Natural killer cell (primary cell): ENCODE measurements at regions of chr5 and their contacts with region 1.

Region 1: GRCh38 chr5:157180374-157181264 is at the start of gene ITK:
- DNase-seq: peak; percentile 27 to 88
- ATAC-seq: peak; percentile 84 to 94 (median 86)
- H3K4me3 ChIP-seq: peak within 1 kb of the TSS; percentile 61
- H3K4me3 Mint-ChIP-seq: peak within 1 kb of the TSS; percentile 99
- H3K27ac ChIP-seq: peak within 1 kb of the TSS; percentile 91
- H3K27ac Mint-ChIP-seq: peak within 1 kb of the TSS; percentile 96 to 97
- H3K4me1 ChIP-seq: peaks cover 21% of the 10 kb centered on the region
- H3K4me1 Mint-ChIP-seq: peaks cover 62 to 71% of the 10 kb centered on the region in 2 donors
- H3K27me3 ChIP-seq: no peaks in the 10 kb centered on the region
- H3K27me3 Mint-ChIP-seq: no peaks in the 10 kb centered on the region
- CTCF ChIP-seq: no peak
- total RNA-seq, gene ITK: 153 to 188 (median 186) TPM

Region 2: DNA sequence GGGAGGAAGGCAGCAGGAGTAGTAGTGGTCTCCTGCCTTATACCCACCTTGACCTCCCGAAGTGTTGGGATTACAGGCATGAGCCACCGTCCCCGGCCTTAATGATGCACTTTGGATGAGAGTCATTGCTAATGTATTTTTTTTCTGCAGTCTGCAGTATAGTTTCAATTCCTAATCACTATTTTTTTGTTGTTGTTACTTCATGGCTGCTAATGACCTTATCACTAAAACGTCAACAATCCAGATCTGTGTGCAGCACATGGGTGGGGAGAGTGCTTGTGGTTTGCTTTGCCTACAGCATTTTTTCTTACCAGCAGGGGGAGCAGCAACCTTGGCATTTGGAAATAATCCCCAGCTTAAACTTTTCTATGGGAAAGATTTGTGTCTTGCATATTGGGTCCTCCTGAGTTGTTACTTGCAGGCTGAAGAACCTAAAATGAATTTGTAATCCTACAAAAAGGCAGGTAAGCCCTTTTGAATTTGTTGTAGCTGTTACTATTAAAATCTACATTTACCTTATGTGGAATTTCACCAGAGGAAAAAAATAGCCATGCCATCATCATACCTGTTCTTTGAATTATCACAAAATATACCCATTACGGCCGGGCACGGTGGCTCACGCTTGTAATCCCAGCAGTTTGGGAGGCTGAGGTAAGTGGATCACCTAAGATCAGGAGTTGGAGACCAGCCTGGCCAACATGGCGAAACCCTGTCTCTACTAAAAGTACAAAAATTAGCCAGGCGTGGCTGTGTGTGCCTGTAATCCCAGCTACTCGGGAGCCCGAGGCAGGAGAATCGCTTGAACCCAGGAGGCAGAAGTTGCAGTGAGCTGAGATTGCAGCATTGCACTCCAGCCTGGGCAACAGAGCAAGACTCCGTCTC is 31.6 kb before region 1 on chr5:
- intact Hi-C with region 1: loop called (anchors 1 kb)
- DNase-seq: peak; percentile 66 to 93
- ATAC-seq: peak; percentile 95 to 97 (median 97)
- H3K4me3 ChIP-seq: no peak overlapping the region
- H3K4me3 Mint-ChIP-seq: no peak overlapping the region
- H3K27ac ChIP-seq: no peak overlapping the region
- H3K27ac Mint-ChIP-seq: peak overlapping the region; percentile 88 to 93
- H3K4me1 ChIP-seq: peaks cover 8% of the 10 kb centered on the region
- H3K4me1 Mint-ChIP-seq: peaks cover 16 to 19% of the 10 kb centered on the region in 2 donors
- H3K27me3 ChIP-seq: no peaks in the 10 kb centered on the region
- H3K27me3 Mint-ChIP-seq: no peaks in the 10 kb centered on the region
- CTCF ChIP-seq: peak; percentile 86

Region 3: DNA sequence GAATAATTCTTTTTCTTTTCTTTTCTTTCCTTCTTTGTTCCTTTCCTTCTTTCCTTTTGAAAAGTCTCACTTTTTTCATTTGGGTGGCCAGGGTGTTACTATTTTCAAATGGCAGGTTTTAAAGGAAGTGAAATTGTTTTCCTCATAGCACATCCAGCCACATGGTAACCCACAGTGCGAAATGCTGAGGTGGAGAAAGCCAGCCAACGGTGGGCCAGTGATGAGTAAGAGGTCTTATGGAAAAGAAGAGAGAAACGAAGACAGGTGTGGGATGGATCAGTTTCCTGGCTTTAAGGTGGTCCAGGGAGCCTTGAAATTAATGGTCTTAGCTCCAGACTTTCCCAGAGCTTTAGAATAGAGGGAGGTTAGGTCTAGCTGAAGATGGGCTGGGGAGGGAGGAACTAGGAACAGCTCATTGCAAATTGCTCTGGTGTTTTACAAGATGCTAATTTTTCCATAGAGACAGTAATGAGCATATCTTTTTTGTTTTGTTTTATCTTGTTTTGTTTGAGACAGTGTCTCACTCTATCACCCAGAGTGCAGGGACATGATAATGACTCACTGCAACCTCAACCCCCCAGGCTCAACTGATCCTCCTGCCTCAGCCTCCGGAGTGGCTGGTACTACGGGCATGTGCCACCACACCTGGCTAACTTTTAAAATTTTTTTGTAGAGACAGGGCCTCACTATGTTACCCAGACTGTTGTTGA is 17.8 kb after region 1 on chr5:
- intact Hi-C with region 1: loop called (anchors 1 kb)
- DNase-seq: peak; percentile 53 to 74
- ATAC-seq: peak; percentile 57 to 70 (median 66)
- H3K4me3 ChIP-seq: no peak overlapping the region
- H3K4me3 Mint-ChIP-seq: peak overlapping the region; percentile 73
- H3K27ac ChIP-seq: peak overlapping the region; percentile 48
- H3K27ac Mint-ChIP-seq: peak overlapping the region; percentile 82 to 97
- H3K4me1 ChIP-seq: peaks cover 70% of the 10 kb centered on the region
- H3K4me1 Mint-ChIP-seq: peaks cover 82 to 85% of the 10 kb centered on the region in 2 donors
- H3K27me3 ChIP-seq: no peaks in the 10 kb centered on the region
- H3K27me3 Mint-ChIP-seq: no peaks in the 10 kb centered on the region
- CTCF ChIP-seq: no peak

Region 4: GRCh38 chr5:157214861-157215513 is 34.4 kb after region 1 on chr5:
- intact Hi-C with region 1: loop called (anchors 2 kb)
- DNase-seq: peak in 1 of 2 donors; percentile 81
- ATAC-seq: peak; percentile 59 to 78 (median 66)
- H3K4me3 ChIP-seq: no peak overlapping the region
- H3K4me3 Mint-ChIP-seq: peak overlapping the region; percentile 89
- H3K27ac ChIP-seq: peak overlapping the region; percentile 73
- H3K27ac Mint-ChIP-seq: peak overlapping the region; percentile 86 to 92
- H3K4me1 ChIP-seq: peaks cover 76% of the 10 kb centered on the region
- H3K4me1 Mint-ChIP-seq: peaks cover 81 to 87% of the 10 kb centered on the region in 2 donors
- H3K27me3 ChIP-seq: no peaks in the 10 kb centered on the region
- H3K27me3 Mint-ChIP-seq: no peaks in the 10 kb centered on the region
- CTCF ChIP-seq: no peak